ENCODE measurements at regions of chr2 and their contacts with region 1.

Region 1: GRCh38 chr2:38875576-38876367 is at the starts of genes DHX57 and MORN2:
- H3K4me3 Mint-ChIP-seq: peak within 1 kb of the TSS; percentile 85
- H3K27ac Mint-ChIP-seq: peak within 1 kb of the TSS; percentile 85
- H3K4me1 Mint-ChIP-seq: peaks cover 27% of the 10 kb centered on the region
- H3K27me3 Mint-ChIP-seq: no peaks in the 10 kb centered on the region

Region 2: GRCh38 chr2:38750891-38751595 is 124.7 kb before region 1 on chr2 and contains the start of gene SRSF7:
- intact Hi-C with region 1: loop called (anchors 2 kb)
- H3K4me3 Mint-ChIP-seq: peak within 1 kb of the TSS; percentile 94
- H3K27ac Mint-ChIP-seq: peak within 1 kb of the TSS; percentile 98
- H3K4me1 Mint-ChIP-seq: peaks cover 46% of the 10 kb centered on the region
- H3K27me3 Mint-ChIP-seq: no peaks in the 10 kb centered on the region

Region 3: GRCh38 chr2:38771632-38772031 is 104.1 kb before region 1 on chr2:
- intact Hi-C with region 1: loop called (anchors 10 kb)
- H3K4me3 Mint-ChIP-seq: no peak overlapping the region
- H3K27ac Mint-ChIP-seq: no peak overlapping the region
- H3K4me1 Mint-ChIP-seq: peaks cover 11% of the 10 kb centered on the region
- H3K27me3 Mint-ChIP-seq: peaks cover 18% of the 10 kb centered on the region

Measured in dendritic cell treated with granulocyte-macrophage colony-stimulating factor and Interleukin-4, amounts not matched to agents 40 ng/mL and 50 ng/mL, for 4 days (primary cell).